MCF 10A (cell line): ENCODE measurements at regions of chr16 and their contacts with region 1.

Region 1: DNA sequence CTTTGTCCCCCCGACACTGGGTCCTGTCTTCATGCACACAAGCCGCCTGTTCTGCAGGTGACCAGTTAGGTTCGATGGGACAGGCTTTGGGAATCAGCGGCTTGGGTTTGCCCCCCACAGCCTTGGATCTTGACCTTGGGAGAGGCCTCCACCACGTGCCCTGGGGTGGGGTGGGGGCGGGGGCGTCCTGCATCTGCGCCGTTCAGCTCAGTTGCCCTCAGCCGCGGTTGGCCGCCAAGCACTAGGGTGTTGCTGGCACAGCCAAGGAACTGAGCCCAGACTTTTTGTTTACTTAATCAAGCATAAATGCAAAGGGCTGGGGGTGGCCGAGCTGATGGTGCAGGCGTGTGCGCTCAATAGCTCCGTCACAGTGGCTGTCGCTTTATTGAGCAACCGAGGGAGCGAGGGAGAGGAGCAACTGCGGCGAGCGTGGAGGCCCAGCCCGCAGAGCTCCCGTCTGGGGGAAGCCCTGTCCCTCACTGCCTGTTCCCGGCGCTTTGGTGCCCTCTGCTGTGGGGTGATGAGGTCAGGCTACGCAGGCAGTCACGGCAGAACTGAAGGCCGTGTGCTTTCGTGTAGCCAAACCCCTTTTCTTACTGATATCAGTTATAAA is 33.9 kb downstream of the JPH3 start:
- DNase-seq: peak; percentile 93
- H3K4me3 Mint-ChIP-seq: peak overlapping the region; percentile 67
- H3K27ac Mint-ChIP-seq: no peak overlapping the region
- H3K4me1 Mint-ChIP-seq: no peaks in the 10 kb centered on the region
- H3K27me3 Mint-ChIP-seq: peaks cover 32% of the 10 kb centered on the region
- CTCF ChIP-seq: peak; percentile 86

Region 2: GRCh38 chr16:87062569-87063442 is 573.4 kb before region 1 on chr16:
- CTCF ChIA-PET with region 1: interaction called, 3 read pairs
- POLR2A ChIA-PET with region 1: no interaction called
- intact Hi-C with region 1: loop called (anchors 2 kb)
- DNase-seq: peak; percentile 77
- H3K4me3 Mint-ChIP-seq: peak overlapping the region; percentile 53
- H3K27ac Mint-ChIP-seq: no peak overlapping the region
- H3K4me1 Mint-ChIP-seq: no peaks in the 10 kb centered on the region
- H3K27me3 Mint-ChIP-seq: no peaks in the 10 kb centered on the region
- CTCF ChIP-seq: peak; percentile 84

Region 3: DNA sequence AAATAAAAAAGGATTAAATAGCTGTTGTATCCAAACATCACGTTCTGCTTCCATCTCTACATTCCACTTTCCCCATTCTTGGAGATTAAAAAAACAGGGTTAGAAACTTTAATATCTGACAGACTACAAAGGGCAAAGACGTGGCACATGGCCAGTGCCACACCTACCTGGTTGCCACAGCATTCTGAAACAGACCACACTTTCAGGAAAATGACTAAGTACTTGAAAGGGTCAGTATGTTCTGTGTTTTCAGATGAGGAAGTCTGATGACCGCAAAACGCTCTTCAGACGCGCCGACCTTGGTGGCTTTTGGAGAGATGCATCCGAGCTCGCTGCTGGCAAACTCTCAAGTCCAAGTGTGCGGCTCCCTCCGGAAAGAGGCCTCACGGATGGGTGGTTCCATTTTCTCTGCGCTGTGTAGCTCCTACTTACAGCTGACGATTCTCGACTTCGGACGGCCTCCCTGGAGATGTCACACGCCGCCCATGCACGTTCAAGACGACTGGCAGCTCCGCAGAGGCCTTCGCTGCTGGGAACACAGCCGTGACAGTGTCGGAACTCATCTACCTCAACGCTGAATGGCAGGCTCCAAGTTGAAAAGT is 228.6 kb before region 1 on chr16:
- CTCF ChIA-PET with region 1: interaction called, 11 read pairs
- POLR2A ChIA-PET with region 1: interaction called, 3 read pairs
- intact Hi-C with region 1: no loop called
- DNase-seq: peak; percentile 94
- H3K4me3 Mint-ChIP-seq: no peak overlapping the region
- H3K27ac Mint-ChIP-seq: peak overlapping the region; percentile 43
- H3K4me1 Mint-ChIP-seq: peaks cover 14% of the 10 kb centered on the region
- H3K27me3 Mint-ChIP-seq: no peaks in the 10 kb centered on the region
- CTCF ChIP-seq: no peak

Region 4: GRCh38 chr16:87461466-87461991 is 174.6 kb before region 1 on chr16:
- CTCF ChIA-PET with region 1: interaction called, 71 read pairs
- POLR2A ChIA-PET with region 1: interaction called, 16 read pairs
- intact Hi-C with region 1: loop called (anchors 1 kb)
- DNase-seq: peak; percentile 95
- H3K4me3 Mint-ChIP-seq: peak overlapping the region; percentile 57
- H3K27ac Mint-ChIP-seq: no peak overlapping the region
- H3K4me1 Mint-ChIP-seq: peaks cover 31% of the 10 kb centered on the region
- H3K27me3 Mint-ChIP-seq: no peaks in the 10 kb centered on the region
- CTCF ChIP-seq: peak; percentile 37

Region 5: DNA sequence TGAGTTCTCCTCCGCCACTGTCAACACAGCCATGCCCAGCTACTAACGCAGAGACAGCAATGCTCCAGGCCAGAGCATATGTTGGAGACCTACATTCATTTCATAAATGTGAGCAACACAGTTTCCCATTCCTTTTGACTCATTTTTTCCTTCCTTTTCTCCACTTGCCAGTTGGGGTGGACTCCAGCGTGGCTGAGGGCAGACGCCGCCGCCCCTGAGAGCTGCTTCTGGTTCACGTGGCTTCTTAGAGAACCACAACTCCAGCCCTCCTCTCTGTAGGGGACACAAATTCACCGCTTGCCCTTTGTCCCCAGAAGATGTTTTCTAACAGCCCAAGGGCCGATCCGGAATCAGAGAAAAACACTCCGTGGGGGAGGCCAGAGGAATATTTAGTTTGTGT is 97.6 kb before region 1 on chr16:
- CTCF ChIA-PET with region 1: interaction called, 13 read pairs
- POLR2A ChIA-PET with region 1: no interaction called
- intact Hi-C with region 1: no loop called
- DNase-seq: no peak
- H3K4me3 Mint-ChIP-seq: no peak overlapping the region
- H3K27ac Mint-ChIP-seq: no peak overlapping the region
- H3K4me1 Mint-ChIP-seq: peaks cover 5% of the 10 kb centered on the region
- H3K27me3 Mint-ChIP-seq: peaks cover 27% of the 10 kb centered on the region
- CTCF ChIP-seq: no peak

Region 6: GRCh38 chr16:87581833-87582203 is 54.4 kb before region 1 on chr16:
- CTCF ChIA-PET with region 1: interaction called, 19 read pairs
- POLR2A ChIA-PET with region 1: no interaction called
- intact Hi-C with region 1: no loop called
- DNase-seq: peak; percentile 97
- H3K4me3 Mint-ChIP-seq: no peak overlapping the region
- H3K27ac Mint-ChIP-seq: peak overlapping the region; percentile 73
- H3K4me1 Mint-ChIP-seq: peaks cover 6% of the 10 kb centered on the region
- H3K27me3 Mint-ChIP-seq: no peaks in the 10 kb centered on the region
- CTCF ChIP-seq: no peak

Region 7: GRCh38 chr16:87765776-87766484 is 129.8 kb after region 1 on chr16 and contains the start of gene KLHDC4:
- CTCF ChIA-PET with region 1: interaction called, 21 read pairs
- POLR2A ChIA-PET with region 1: interaction called, 5 read pairs
- intact Hi-C with region 1: no loop called
- DNase-seq: peak; percentile 84
- H3K4me3 Mint-ChIP-seq: peak within 1 kb of the TSS; percentile 88
- H3K27ac Mint-ChIP-seq: peak within 1 kb of the TSS; percentile 95
- H3K4me1 Mint-ChIP-seq: peaks cover 24% of the 10 kb centered on the region
- H3K27me3 Mint-ChIP-seq: no peaks in the 10 kb centered on the region
- CTCF ChIP-seq: no peak
- total RNA-seq, gene KLHDC4: 82.9 and 106 TPM in 2 replicates